Heart left ventricle (tissue), 16 donors: ENCODE measurements at regions of chr18 and their contacts with region 1.

Region 1: DNA sequence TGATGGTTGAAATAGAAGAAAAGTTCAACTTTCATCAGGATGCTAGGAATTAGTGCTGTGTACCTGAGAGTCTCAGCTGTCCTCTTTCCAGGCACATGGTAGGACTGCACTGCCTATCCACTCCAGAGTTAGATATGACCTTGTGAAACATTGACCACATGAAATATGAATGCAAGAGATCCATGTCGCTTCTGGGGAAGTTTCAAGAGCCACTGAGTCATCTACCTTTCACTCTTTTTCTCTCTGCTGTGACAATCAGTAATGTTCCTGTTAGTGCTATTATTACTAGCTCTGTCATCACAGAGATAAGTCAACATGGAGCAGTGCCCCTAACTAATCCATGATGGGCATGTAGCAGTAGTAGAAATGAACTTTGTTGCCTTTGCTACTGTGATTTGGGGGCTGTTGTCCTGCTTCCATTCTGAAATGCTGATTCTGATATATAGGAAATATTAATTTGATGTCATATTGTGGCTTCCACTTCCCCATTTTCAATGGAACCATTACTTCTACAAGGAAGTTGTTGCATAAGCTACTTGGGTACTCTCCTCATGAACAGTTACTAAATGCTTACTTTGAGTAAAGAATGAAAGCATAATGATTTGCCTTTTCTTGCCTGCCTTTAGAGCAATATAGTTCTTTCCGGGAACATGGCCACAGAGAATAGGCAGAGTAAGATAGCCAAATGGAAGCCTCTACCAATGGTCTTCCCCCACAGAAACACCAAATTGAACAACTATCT is 192.8 kb upstream of the ZNF521 start:
- DNase-seq: no peak
- ATAC-seq: no peak
- H3K4me3 ChIP-seq: no peak overlapping the region
- H3K27ac ChIP-seq: no peak overlapping the region
- H3K4me1 ChIP-seq: no peaks in the 10 kb centered on the region
- H3K27me3 ChIP-seq: no peaks in the 10 kb centered on the region
- CTCF ChIP-seq: no peak
- POLR2A ChIP-seq: no peak

Region 2: DNA sequence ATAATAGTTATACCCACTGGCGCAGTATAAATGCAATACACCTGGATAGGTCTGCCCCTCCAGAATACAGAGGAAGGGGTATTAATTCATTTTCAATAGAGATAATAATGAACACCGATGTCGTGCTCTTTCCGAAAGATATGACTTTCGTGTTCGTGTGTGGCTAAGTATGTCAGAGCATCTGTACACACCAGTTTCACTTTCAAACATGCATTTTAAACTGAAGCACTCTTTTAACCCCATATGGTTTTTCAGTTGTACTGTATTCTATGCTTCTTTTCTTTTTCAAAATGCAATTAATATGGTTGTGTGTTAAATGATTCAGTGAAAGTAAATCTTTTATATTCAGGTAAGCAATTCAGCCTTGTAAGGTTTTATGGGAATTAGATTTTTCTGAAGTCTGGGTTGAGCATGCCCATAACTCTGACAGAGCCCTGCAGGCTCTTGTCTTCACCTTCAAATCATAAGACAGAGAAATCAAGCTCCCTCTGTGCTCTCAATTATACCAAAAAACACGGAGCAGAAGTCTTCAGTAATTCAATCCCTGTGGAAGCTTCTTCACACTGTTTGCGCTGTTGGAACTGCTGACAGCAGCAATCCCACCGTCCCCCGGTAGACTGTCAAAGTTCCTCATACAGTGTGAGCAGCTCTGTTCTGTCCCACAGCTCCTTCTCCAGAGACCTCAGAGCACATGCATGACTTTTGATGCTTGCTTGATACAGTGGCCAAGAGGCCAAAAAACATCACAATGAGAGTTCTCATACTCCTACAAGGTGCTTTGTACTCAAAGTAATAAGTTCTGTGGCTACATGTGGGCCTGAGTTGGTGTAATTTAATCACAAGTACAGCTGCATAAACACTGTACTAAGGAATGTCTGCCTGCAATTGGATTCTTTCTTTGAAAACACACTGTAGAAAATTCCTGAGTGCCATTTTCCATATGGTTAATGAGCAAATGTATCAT is 379.6 kb before region 1 on chr18:
- intact Hi-C with region 1: loop called in 1 of 10 experiments (anchors 5 kb)
- DNase-seq: peak; percentile 19 to 46 (median 29)
- ATAC-seq: peak; percentile 72 to 82 (median 80)
- H3K4me3 ChIP-seq: peak overlapping the region; percentile 10 to 60 (median 44)
- H3K27ac ChIP-seq: peak overlapping the region in 8 of 12 donors; percentile 17 to 61 (median 44)
- H3K4me1 ChIP-seq: peaks cover 0 to 29% (median 17%) of the 10 kb centered on the region in 12 donors
- H3K27me3 ChIP-seq: no peaks in the 10 kb centered on the region
- CTCF ChIP-seq: peak in 2 of 12 donors; percentile 13 to 16
- POLR2A ChIP-seq: no peak

Region 3: DNA sequence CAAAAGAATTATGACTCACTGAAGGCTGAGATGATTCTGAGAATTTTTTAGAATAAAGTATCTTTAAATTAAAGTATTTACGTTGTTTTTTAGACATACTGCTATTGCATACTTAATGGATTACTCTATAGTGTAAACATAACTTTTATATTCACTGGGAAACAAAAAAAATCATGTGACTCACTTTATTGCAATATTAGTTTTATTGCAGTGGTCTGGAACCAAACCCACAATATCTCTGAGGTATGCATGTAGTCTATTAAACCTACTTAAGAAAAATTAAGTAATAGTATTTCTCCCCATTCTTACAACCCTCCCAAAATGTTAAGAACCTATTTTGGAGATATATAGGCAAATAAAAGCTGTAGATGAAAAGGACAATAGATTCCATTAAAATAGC is 49.8 kb before region 1 on chr18:
- intact Hi-C with region 1: loop called in 1 of 10 experiments (anchors 5 kb)
- DNase-seq: no peak
- ATAC-seq: no peak
- H3K4me3 ChIP-seq: no peak overlapping the region
- H3K27ac ChIP-seq: no peak overlapping the region
- H3K4me1 ChIP-seq: no peaks in the 10 kb centered on the region
- H3K27me3 ChIP-seq: no peaks in the 10 kb centered on the region
- CTCF ChIP-seq: no peak
- POLR2A ChIP-seq: no peak

Region 4: DNA sequence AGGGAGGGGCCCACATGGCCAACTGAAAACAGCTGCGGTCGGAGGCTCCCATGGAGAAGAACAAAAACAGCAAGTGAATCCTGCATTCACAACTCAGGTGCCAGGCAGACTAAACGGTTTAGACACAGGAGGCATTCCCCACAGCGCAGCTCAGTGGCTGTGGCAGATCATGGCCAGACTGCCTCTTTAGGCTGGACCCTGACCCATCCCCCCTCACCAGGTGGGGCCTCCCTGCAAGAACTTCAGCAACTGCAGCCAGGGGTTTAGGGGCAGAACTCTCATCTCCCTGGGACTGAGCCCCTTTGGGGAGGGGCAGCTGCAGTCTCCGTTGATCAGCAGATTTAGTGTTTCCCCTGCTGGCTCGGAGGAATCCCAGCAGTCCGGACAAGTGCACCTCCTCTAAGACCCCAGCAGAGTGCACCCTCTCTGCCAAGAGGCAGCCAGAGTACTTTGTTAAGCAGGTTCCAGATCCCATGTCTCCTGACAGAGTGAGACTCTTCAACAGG is 199.0 kb after region 1 on chr18:
- intact Hi-C with region 1: no loop called
- DNase-seq: no peak
- ATAC-seq: no peak
- H3K4me3 ChIP-seq: no peak overlapping the region
- H3K27ac ChIP-seq: no peak overlapping the region
- H3K4me1 ChIP-seq: no peaks in the 10 kb centered on the region
- H3K27me3 ChIP-seq: peaks cover 0 to 6% (median 0%) of the 10 kb centered on the region in 9 donors
- CTCF ChIP-seq: no peak
- POLR2A ChIP-seq: no peak